ENCODE measurements at regions of chr9 and their contacts with region 1.

Region 1: GRCh38 chr9:128034821-128035764 is 32.0 kb downstream of the NAIF1 start:
- DNase-seq: peak; percentile 79
- ATAC-seq: peak; percentile 96

Region 2: DNA sequence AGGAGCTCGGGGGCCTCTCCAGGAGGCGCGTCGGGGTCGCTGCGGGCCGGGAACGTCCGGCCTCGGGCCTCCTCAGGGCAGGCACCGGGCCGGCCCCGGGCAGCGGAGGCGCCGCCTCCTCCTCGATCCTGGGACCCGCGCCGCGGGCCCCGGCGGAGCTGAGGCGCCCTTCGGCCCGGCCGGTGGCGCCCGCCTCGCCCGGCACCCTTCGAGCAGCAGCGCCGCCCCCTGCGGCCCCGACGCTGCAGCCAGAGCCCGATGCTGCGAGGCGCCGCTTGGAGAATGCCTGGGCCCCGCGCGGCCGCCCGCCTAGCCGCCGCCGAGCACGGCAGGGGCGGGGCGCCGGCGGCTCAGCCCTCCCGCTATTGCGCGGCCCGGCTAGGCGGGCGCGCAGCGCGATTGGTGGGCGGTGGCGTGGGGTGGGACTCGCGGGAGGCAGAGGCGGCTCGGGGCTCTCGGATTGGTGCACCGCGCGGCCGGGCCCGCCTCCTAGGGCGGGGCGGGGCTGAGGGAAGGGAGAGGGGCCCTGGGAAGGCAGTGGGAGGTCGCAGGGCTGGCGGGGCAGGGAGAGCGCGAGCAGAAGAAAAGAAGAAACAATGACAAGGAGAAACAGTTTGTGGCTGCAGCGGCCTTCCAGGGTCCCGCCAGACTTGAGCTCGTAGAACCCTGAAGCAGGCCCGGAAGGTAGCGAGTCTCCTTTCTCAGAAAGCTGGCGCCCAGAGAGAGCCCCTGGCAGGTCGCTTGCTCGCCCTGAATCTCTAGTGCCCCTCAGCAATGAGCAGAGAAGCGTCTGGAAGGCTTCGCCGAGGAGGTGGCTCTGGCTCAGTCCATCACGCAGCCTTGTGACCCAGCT is 54.2 kb before region 1 on chr9 and contains the start of gene EEIG1:
- intact Hi-C with region 1: loop called (anchors 10 kb)
- DNase-seq: peak; percentile 98
- ATAC-seq: peak; percentile 94
- total RNA-seq, gene EEIG1: 96.8 TPM

Region 3: DNA sequence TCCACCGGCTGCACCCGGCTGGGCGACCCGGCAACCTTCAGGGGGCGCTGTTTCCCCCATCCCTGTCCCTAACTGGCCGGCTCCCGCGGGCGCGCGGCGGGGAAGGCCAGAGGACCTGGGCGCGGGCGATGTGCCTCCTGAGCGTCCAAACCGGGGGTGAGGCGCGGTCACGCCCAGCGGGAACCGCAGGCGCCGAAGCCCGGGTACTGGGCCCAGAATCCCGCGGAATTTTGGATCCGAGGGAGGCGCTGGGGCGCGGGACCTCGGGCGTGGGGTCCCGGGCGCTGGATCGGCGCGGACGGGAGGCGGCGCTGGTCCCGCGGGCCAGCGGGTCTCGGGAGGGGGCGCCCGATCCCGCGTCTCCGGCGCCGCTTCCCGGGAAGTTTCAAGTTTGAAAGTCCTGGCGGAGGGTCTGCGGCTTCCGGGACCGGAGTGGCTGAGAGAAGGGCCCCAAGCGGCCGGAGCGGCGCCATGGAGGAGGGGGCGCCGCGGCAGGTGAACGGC is 667.4 kb after region 1 on chr9 and contains the start of gene PKN3:
- intact Hi-C with region 1: no loop called
- DNase-seq: peak; percentile 93
- ATAC-seq: peak; percentile 87
- total RNA-seq, gene PKN3: 9.9 TPM

Measured in sciatic nerve (tissue), 2 donors.